Activated CD4-positive, alpha-beta memory T cell treated with anti-CD3 and anti-CD28 coated beads, Interleukin-2, amount 10 ng/mL, durations not matched to agents 7 days and 5 days (primary cell): ENCODE measurements at regions of chr19 and their contacts with region 1.

Region 1: DNA sequence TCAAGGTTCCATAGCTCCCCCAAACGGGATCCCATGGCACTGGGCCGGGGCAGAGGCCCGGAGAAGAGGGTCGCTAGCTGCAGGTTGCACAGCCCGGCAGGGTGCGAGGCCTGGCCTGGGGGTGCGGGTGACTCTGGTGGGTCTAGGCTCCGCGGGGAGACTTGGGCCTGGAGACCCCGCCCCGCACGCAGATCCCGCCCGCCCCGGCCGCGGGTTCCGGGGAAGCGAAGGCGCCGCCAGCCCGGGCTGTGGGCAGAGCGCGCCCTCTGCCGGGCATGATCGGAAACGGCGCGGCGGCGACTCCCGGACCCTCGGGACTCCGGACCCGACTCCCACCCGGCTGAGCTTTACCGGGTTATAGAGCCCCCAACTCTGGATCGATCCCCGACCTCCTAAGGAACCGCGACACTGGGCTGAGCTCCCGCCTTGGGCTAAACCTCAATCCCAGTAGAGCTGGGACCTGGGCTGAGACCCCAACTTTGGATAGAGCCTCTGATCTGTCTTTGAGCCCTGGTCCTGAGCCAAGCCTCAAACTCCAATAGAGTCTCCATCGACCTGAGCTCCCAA is 3.1 kb upstream of the TNFAIP8L1 start:
- DNase-seq: peak; percentile 81
- H3K4me3 Mint-ChIP-seq: peak overlapping the region; percentile 43
- H3K27ac Mint-ChIP-seq: peak overlapping the region; percentile 40
- H3K4me1 Mint-ChIP-seq: peaks cover 49% of the 10 kb centered on the region
- H3K27me3 Mint-ChIP-seq: peaks cover 2% of the 10 kb centered on the region

Region 2: DNA sequence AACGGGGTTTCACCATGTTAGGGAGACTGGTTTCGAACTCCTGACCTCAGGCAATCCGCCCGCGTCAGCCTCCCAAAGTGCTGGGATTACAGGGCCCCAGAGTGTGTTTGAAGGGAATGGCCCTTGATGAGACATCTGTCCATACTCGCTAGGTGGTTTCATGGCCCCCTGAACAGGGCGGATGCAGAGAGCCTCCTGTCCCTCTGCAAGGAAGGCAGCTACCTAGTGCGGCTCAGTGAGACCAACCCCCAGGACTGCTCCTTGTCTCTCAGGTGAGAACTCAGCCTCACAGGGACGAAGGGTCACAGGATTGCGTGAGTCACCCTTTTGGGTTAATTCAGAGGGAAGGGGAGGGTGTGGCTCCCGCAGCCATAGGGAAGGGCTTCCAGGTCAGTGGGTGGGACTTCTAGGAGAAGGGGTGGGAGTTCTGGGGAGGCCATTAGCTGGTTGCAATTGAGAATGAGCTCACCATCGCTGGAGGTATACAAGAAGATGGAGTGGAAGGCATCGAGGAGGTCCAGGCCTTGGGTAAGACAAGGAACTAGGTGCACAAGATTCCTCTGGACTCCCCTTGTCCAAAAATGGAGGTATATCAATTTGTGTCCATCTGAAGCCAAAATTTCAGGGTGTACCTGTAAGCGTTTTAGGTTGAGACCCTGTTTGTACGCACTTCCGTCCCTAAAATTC is 348.0 kb before region 1 on chr19:
- CTCF ChIA-PET with region 1: no interaction called
- POLR2A ChIA-PET with region 1: no interaction called
- DNase-seq: no peak
- H3K4me3 Mint-ChIP-seq: no peak overlapping the region
- H3K27ac Mint-ChIP-seq: no peak overlapping the region
- H3K4me1 Mint-ChIP-seq: no peaks in the 10 kb centered on the region
- H3K27me3 Mint-ChIP-seq: no peaks in the 10 kb centered on the region

Region 3: GRCh38 chr19:4567584-4568071 is 68.6 kb before region 1 on chr19:
- CTCF ChIA-PET with region 1: interaction called, 29 read pairs
- POLR2A ChIA-PET with region 1: interaction called, 3 read pairs
- DNase-seq: peak; percentile 67
- H3K4me3 Mint-ChIP-seq: no peak overlapping the region
- H3K27ac Mint-ChIP-seq: no peak overlapping the region
- H3K4me1 Mint-ChIP-seq: no peaks in the 10 kb centered on the region
- H3K27me3 Mint-ChIP-seq: no peaks in the 10 kb centered on the region

Region 4: GRCh38 chr19:4576016-4576933 is 60.0 kb before region 1 on chr19:
- CTCF ChIA-PET with region 1: interaction called, 20 read pairs
- POLR2A ChIA-PET with region 1: no interaction called
- DNase-seq: peak; percentile 73
- H3K4me3 Mint-ChIP-seq: no peak overlapping the region
- H3K27ac Mint-ChIP-seq: no peak overlapping the region
- H3K4me1 Mint-ChIP-seq: no peaks in the 10 kb centered on the region
- H3K27me3 Mint-ChIP-seq: peaks cover 22% of the 10 kb centered on the region